PC-9 (cell line): ENCODE measurements at regions of chr6 and their contacts with region 1.

Region 1: GRCh38 chr6:36526066-36526465 is 21.2 kb downstream of the STK38 start:
- DNase-seq: peak in 1 of 2 experiments; percentile 70
- H3K4me3 ChIP-seq: no peak overlapping the region
- H3K27ac ChIP-seq: peak overlapping the region; percentile 14; the same call in 1 of the 2 replicates
- H3K4me1 ChIP-seq: peaks cover 16% of the 10 kb centered on the region
- H3K27me3 ChIP-seq: no peaks in the 10 kb centered on the region
- CTCF ChIP-seq: no peak

Region 2: DNA sequence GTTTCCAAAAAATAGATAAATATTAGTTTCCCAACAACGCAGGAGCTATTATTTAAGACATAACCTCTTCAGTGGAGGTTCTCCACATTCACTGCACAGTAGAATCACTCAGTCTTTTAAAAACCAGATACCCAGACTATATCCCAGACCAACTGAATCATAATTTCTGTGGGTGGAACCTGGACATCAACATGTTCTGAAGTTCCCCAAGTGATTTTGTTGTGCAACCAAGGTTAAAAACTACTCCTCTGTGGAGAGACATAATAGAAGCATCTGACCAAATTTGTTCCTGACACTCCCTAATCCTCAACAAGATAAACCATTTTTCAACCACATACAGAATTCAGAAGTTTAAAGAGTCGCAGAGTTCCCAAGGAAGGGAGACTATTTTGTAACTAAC is 21.1 kb before region 1 on chr6:
- CTCF ChIA-PET with region 1: interaction called, 16 read pairs
- POLR2A ChIA-PET with region 1: no interaction called
- intact Hi-C with region 1: no loop called
- DNase-seq: no peak
- H3K4me3 ChIP-seq: no peak overlapping the region
- H3K27ac ChIP-seq: no peak overlapping the region
- H3K4me1 ChIP-seq: peaks cover 13% of the 10 kb centered on the region
- H3K27me3 ChIP-seq: no peaks in the 10 kb centered on the region
- CTCF ChIP-seq: no peak

Region 3: GRCh38 chr6:36570264-36570663 is 44.2 kb after region 1 on chr6:
- CTCF ChIA-PET with region 1: interaction called, 17 read pairs
- POLR2A ChIA-PET with region 1: no interaction called
- intact Hi-C with region 1: no loop called
- DNase-seq: no peak
- H3K4me3 ChIP-seq: no peak overlapping the region
- H3K27ac ChIP-seq: no peak overlapping the region
- H3K4me1 ChIP-seq: peaks cover 7% of the 10 kb centered on the region; the same call in 1 of the 2 replicates
- H3K27me3 ChIP-seq: no peaks in the 10 kb centered on the region
- CTCF ChIP-seq: no peak